Heart right ventricle (tissue), 16 donors: ENCODE measurements at regions of chr11 and their contacts with region 1.

Region 1: GRCh38 chr11:112942966-112943643 is 18.1 kb upstream of the NCAM1 start:
- DNase-seq: no peak
- ATAC-seq: peak in 7 of 8 donors; percentile 55 to 92 (median 88)
- H3K4me3 ChIP-seq: no peak overlapping the region
- H3K27ac ChIP-seq: peak overlapping the region; percentile 27 to 78 (median 70)
- H3K4me1 ChIP-seq: peaks cover 0 to 17% (median 0%) of the 10 kb centered on the region in 9 donors
- H3K27me3 ChIP-seq: no peaks in the 10 kb centered on the region
- CTCF ChIP-seq: no peak

Region 2: GRCh38 chr11:112864672-112865071 is 78.4 kb before region 1 on chr11:
- intact Hi-C with region 1: loop called in 1 of 10 experiments (anchors 10 kb)
- DNase-seq: no peak
- ATAC-seq: peak in 7 of 8 donors; percentile 43 to 84 (median 70)
- H3K4me3 ChIP-seq: no peak overlapping the region
- H3K27ac ChIP-seq: peak overlapping the region in 4 of 10 donors; percentile 42 to 75 (median 70)
- H3K4me1 ChIP-seq: peaks cover 0 to 21% (median 11%) of the 10 kb centered on the region in 9 donors
- H3K27me3 ChIP-seq: no peaks in the 10 kb centered on the region
- CTCF ChIP-seq: no peak